CD8-positive, alpha-beta T cell (primary cell): ENCODE measurements at regions of chr1 and their contacts with region 1.

Region 1: DNA sequence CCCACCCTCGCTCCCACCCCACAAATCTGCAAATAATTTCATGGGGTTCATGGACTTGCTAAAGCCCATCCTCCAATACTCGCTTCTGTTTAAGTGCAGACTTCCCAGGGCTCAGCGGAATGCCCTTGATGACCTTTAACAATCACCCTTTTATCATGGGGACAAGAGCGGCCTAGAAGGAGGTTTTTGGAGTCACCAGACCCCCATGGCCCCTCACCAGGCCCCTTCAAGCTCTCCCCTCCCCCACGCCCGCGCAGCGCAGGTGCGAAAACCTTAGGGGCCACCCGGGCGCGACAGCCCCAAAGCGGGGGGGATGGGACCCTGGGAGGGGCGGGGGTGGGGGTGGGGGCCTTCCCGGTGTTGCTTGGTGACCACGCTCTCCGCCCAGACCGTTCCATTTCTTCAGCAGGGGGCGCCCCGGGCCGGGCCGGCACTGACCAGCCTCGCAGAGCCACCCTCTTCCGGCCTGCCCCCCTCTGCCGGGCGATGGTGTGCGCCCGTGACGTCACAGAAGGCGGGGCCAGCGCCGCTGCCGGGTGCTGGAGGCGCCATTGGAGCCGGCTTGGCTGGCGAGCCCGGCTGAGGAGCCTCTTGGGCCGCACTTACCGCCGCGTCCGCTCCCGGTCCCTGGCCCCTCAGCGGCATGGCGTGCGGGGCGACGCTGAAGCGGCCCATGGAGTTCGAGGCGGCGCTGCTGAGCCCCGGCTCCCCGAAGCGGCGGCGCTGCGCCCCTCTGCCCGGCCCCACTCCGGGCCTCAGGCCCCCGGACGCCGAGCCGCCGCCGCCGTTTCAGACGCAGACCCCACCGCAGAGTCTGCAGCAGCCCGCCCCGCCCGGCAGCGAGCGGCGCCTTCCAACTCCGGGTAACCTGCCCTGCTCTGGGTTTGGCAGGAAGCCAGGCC is at the start of gene AKIRIN1:
- DNase-seq: peak; percentile 81 to 98 (median 94)
- ATAC-seq: peak; percentile 90
- H3K4me3 ChIP-seq: peak within 1 kb of the TSS; percentile 53 to 93
- H3K4me3 Mint-ChIP-seq: peak within 1 kb of the TSS; percentile 87
- H3K27ac ChIP-seq: peak within 1 kb of the TSS; percentile 82 to 84
- H3K27ac Mint-ChIP-seq: peak within 1 kb of the TSS; percentile 89
- H3K4me1 ChIP-seq: peaks cover 40% of the 10 kb centered on the region
- H3K4me1 Mint-ChIP-seq: peaks cover 38% of the 10 kb centered on the region
- H3K27me3 ChIP-seq: no peaks in the 10 kb centered on the region
- H3K27me3 Mint-ChIP-seq: no peaks in the 10 kb centered on the region
- CTCF ChIP-seq: no peak
- total RNA-seq, gene AKIRIN1: 122 to 123 TPM

Region 2: DNA sequence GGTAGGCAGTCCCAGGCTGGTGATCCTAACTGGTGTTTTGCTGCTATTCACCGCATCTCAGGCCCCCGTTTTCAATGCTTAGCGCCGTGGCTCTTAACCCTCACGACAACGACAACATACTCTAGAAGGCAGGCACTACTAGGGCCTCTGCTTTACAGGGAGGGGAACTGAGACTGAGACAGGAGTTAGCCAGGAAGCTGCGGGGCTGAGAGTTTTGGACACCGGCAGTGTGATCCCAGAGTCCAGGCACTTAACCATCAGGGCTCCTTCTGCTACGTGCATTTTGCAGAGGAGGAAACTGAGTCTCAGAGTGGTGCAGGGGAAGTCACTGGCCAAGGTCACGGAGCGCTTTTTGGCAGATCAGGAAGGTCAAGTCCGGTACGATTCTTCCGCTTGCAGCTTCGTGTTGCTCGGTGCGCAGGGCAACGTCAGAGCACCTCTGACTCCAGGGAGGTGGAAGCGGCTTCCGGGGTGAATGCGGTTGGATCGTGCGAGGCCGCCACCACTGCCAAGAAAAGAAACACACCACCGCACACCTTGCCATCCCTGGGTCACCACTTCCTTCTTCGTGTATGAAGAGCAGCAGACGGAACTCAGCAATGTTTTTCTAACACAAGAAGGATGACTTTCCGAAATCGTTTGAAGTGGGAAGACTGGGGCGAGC is 431.7 kb before region 1 on chr1:
- CTCF ChIA-PET with region 1: no interaction called
- POLR2A ChIA-PET with region 1: no interaction called
- intact Hi-C with region 1: loop called in 1 of 2 experiments (anchors 10 kb)
- DNase-seq: peak; percentile 73 to 96 (median 82)
- ATAC-seq: peak; percentile 85
- H3K4me3 ChIP-seq: peak overlapping the region in 1 of 2 experiments; percentile 22
- H3K4me3 Mint-ChIP-seq: peak overlapping the region; percentile 73
- H3K27ac ChIP-seq: peak overlapping the region; percentile 30 to 39
- H3K27ac Mint-ChIP-seq: peak overlapping the region; percentile 88
- H3K4me1 ChIP-seq: peaks cover 50% of the 10 kb centered on the region
- H3K4me1 Mint-ChIP-seq: peaks cover 63% of the 10 kb centered on the region
- H3K27me3 ChIP-seq: peaks cover 0 to 7% of the 10 kb centered on the region in 2 experiments
- H3K27me3 Mint-ChIP-seq: peaks cover 24% of the 10 kb centered on the region
- CTCF ChIP-seq: no peak

Region 3: DNA sequence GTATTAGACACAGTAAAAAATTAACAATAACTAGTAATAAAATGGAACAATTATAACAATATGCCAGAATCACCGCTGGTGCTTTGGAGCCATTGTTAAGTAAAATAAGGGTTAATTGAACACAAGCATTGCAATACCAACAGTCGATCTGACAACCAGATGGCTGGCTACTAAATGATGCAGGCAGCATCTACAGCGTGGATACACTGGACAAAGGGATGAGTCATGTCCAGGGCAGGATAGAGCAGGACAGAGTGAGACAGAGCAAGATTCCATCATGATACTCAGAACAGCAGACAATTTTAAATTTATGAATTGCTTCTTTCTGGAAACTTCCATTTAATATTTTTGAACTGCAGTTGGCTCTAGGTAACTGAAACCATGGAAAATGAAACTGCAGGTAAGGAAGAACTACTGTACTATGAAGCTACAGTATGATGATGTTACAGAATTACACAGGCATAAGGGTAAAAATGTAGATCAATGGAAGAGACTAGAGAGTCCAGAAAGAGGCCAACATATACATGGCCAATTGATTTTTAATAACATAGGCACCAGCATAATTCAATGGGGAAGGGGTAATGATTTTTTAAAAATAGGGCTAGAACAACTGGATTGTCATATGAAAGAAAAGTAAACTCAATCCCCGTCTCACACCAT is 300.1 kb before region 1 on chr1:
- CTCF ChIA-PET with region 1: no interaction called
- POLR2A ChIA-PET with region 1: no interaction called
- intact Hi-C with region 1: no loop called
- DNase-seq: no peak
- ATAC-seq: no peak
- H3K4me3 ChIP-seq: no peak overlapping the region
- H3K4me3 Mint-ChIP-seq: no peak overlapping the region
- H3K27ac ChIP-seq: no peak overlapping the region
- H3K27ac Mint-ChIP-seq: no peak overlapping the region
- H3K4me1 ChIP-seq: no peaks in the 10 kb centered on the region
- H3K4me1 Mint-ChIP-seq: no peaks in the 10 kb centered on the region
- H3K27me3 ChIP-seq: peaks cover 0 to 2% of the 10 kb centered on the region in 2 experiments
- H3K27me3 Mint-ChIP-seq: peaks cover 36% of the 10 kb centered on the region
- CTCF ChIP-seq: no peak

Region 4: GRCh38 chr1:38873027-38873969 is 117.7 kb before region 1 on chr1 and contains the start of gene MYCBP:
- CTCF ChIA-PET with region 1: no interaction called
- POLR2A ChIA-PET with region 1: no interaction called
- intact Hi-C with region 1: loop called (anchors 1 kb)
- DNase-seq: peak; percentile 94 to 98 (median 97)
- ATAC-seq: peak; percentile 98
- H3K4me3 ChIP-seq: peak within 1 kb of the TSS; percentile 56 to 92
- H3K4me3 Mint-ChIP-seq: peak within 1 kb of the TSS; percentile 93
- H3K27ac ChIP-seq: peak within 1 kb of the TSS; percentile 67 to 71
- H3K27ac Mint-ChIP-seq: peak within 1 kb of the TSS; percentile 84
- H3K4me1 ChIP-seq: peaks cover 16% of the 10 kb centered on the region
- H3K4me1 Mint-ChIP-seq: peaks cover 31% of the 10 kb centered on the region
- H3K27me3 ChIP-seq: no peaks in the 10 kb centered on the region
- H3K27me3 Mint-ChIP-seq: no peaks in the 10 kb centered on the region
- CTCF ChIP-seq: no peak
- total RNA-seq, gene MYCBP: 2.0 to 3.2 TPM

Region 5: GRCh38 chr1:38973659-38974424 is 17.1 kb before region 1 on chr1:
- CTCF ChIA-PET with region 1: interaction called, 3 read pairs
- POLR2A ChIA-PET with region 1: interaction called, 7 read pairs
- intact Hi-C with region 1: loop called (anchors 1 kb)
- DNase-seq: no peak
- ATAC-seq: no peak
- H3K4me3 ChIP-seq: no peak overlapping the region
- H3K4me3 Mint-ChIP-seq: no peak overlapping the region
- H3K27ac ChIP-seq: no peak overlapping the region
- H3K27ac Mint-ChIP-seq: no peak overlapping the region
- H3K4me1 ChIP-seq: peaks cover 9% of the 10 kb centered on the region
- H3K4me1 Mint-ChIP-seq: peaks cover 13% of the 10 kb centered on the region
- H3K27me3 ChIP-seq: no peaks in the 10 kb centered on the region
- H3K27me3 Mint-ChIP-seq: no peaks in the 10 kb centered on the region
- CTCF ChIP-seq: no peak

Region 6: DNA sequence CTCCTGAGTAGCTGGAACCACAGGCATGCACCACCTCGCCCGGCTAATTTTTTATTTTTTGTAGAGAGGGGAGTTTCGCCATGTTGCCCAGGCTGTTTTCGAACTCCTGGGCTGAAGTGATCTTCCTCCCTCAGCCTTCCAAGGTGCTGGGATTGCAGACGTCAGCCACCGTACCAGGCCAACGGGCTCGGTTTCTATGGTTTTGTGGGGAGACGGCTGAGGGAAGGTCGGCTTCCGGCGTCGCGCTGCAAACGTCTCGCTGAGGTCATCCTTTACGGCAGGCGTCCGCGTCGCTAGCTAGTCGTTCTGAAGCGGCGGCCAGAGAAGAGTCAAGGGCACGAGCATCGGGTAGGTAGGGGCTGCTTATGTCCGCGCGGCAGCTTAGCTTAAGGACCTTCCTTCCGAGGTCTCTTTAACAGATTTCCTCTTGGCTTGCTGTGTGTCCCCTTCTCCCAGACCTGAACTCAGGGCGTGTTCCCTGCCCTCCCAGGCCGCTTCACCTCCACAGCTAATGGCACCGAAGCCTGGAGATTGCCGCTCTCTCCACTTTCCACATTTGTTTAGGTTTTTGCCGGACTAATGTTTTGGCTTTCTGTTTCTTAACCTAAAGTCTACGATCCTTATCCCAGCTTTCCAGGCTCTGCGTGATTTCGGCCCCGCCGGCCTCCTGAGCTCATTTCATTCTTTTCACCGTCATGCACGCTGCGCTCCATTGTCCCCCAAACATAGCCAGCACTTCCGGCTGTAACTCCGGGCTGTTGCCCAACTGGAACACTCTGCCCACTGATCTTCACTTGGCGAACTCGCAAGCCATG is 35.3 kb after region 1 on chr1 and contains the start of gene NDUFS5:
- CTCF ChIA-PET with region 1: interaction called, 3 read pairs
- POLR2A ChIA-PET with region 1: interaction called, 3 read pairs
- intact Hi-C with region 1: loop called (anchors 1 kb)
- DNase-seq: peak; percentile 62 to 93 (median 83)
- ATAC-seq: peak; percentile 94
- H3K4me3 ChIP-seq: peak within 1 kb of the TSS; percentile 70 to 86
- H3K4me3 Mint-ChIP-seq: peak within 1 kb of the TSS; percentile 95
- H3K27ac ChIP-seq: peak within 1 kb of the TSS; percentile 74 to 88
- H3K27ac Mint-ChIP-seq: peak within 1 kb of the TSS; percentile 97
- H3K4me1 ChIP-seq: peaks cover 17% of the 10 kb centered on the region
- H3K4me1 Mint-ChIP-seq: peaks cover 31% of the 10 kb centered on the region
- H3K27me3 ChIP-seq: no peaks in the 10 kb centered on the region
- H3K27me3 Mint-ChIP-seq: no peaks in the 10 kb centered on the region
- CTCF ChIP-seq: no peak
- total RNA-seq, gene NDUFS5: 93.1 to 105 TPM

Region 7: DNA sequence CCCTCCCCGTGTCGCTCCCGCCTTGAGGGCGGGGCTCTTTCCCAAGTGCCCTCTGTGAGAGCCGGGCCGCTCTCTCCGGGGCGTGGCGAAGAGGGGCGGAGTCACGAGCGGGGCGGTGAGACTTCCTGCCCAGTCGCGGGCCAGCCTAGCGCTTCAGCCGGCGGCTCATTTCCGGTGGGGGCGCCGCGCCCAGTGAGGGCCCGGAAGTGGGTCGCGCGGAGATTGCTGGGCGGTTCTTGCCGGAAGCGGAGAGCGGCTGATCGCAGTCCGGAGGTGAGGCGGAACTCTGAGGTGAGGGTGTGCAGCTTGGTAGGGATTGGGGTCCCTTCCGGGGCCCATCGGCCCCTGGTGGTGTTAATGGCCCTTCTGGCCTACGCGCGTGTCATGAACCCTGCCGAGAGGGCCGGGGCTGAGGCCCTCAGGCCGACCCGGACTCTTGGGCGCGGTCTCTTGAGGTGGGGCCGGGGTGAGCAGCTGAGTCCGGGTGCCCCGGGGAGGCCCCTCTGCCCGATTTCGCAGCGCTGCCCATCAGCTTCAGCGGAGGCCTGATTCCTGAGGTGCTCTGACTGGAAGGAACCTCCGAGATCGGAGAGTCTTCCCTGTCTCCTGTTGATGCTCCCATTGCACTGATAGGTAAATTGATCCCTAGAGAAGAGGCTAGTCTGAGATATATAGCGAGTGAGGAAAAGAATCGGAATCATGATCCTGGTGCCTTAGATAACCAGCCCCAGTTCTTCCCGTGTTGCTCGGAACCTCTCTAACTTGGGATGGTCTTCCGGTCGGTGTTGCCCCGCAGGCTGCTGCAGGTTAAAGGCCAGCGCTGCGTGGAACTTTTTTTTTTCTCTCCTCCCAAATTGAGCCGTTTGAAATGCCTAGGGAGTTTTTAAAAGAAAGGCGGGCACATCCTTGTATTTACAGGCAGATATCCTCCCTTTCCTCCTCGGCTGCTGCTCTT is 1049.8 kb after region 1 on chr1 and contains the start of gene CAP1:
- CTCF ChIA-PET with region 1: no interaction called
- POLR2A ChIA-PET with region 1: no interaction called
- intact Hi-C with region 1: no loop called
- DNase-seq: peak; percentile 99 to 100 (median 100)
- ATAC-seq: peak; percentile 89
- H3K4me3 ChIP-seq: peak within 1 kb of the TSS; percentile 99
- H3K4me3 Mint-ChIP-seq: peak within 1 kb of the TSS; percentile 89
- H3K27ac ChIP-seq: peak within 1 kb of the TSS; percentile 92 to 94
- H3K27ac Mint-ChIP-seq: peak within 1 kb of the TSS; percentile 93
- H3K4me1 ChIP-seq: peaks cover 71% of the 10 kb centered on the region
- H3K4me1 Mint-ChIP-seq: peaks cover 70% of the 10 kb centered on the region
- H3K27me3 ChIP-seq: no peaks in the 10 kb centered on the region
- H3K27me3 Mint-ChIP-seq: no peaks in the 10 kb centered on the region
- CTCF ChIP-seq: no peak
- total RNA-seq, gene CAP1: 123 to 126 TPM